Activated CD8-positive, alpha-beta T cell treated with anti-CD3 and anti-CD28 coated beads for 36 hours (primary cell): ENCODE measurements at regions of chr12 and their contacts with region 1.

Region 1: GRCh38 chr12:54251667-54252284 is 28.1 kb downstream of the CBX5 start:
- DNase-seq: peak; percentile 22
- ATAC-seq: peak; percentile 62
- H3K4me3 Mint-ChIP-seq: no peak overlapping the region
- H3K27ac Mint-ChIP-seq: no peak overlapping the region
- H3K4me1 Mint-ChIP-seq: peaks cover 11% of the 10 kb centered on the region
- H3K27me3 Mint-ChIP-seq: no peaks in the 10 kb centered on the region
- CTCF ChIP-seq: peak; percentile 49

Region 2: DNA sequence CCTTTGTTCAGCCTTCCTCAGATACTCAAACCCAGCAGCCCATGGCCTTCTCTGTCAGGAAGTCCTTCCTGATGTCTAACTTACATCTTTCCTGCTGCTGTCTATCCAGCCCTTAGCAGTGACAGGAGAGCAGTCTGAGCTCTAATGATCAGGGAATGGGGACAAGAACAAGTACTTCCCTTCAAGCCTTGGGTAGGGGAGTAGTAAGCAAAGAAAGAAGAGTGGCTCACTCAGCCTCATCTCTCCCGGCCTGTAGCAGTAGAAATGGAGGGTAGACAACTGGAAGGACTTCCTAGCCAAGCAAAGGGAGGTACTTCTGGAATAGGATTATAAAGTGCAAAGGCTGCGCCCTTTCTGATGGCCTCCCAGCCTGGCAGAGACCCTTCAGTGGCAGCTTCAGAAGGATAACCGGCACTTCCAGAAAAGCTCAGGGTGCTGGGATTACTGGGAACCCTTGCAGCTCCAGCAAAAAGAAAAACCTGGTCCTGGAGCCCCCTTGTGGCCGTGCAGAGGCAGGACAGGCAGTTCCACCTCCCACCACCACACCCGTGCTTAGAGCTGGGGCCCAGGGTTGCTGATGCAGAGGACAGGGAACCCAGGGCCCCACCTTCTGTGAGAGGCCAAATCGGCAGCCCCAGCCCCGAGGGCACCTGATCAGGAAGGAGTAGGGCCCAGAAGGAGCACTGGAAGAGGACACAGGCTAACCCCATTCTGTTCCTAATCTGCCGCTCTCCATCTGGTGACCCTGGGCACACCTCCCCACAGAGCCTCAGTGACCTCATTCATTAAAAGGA is 50.6 kb before region 1 on chr12:
- CTCF ChIA-PET with region 1: no interaction called
- POLR2A ChIA-PET with region 1: no interaction called
- intact Hi-C with region 1: no loop called
- DNase-seq: peak; percentile 72
- ATAC-seq: peak; percentile 96
- H3K4me3 Mint-ChIP-seq: no peak overlapping the region
- H3K27ac Mint-ChIP-seq: no peak overlapping the region
- H3K4me1 Mint-ChIP-seq: no peaks in the 10 kb centered on the region
- H3K27me3 Mint-ChIP-seq: peaks cover 52% of the 10 kb centered on the region
- CTCF ChIP-seq: peak; percentile 94

Region 3: DNA sequence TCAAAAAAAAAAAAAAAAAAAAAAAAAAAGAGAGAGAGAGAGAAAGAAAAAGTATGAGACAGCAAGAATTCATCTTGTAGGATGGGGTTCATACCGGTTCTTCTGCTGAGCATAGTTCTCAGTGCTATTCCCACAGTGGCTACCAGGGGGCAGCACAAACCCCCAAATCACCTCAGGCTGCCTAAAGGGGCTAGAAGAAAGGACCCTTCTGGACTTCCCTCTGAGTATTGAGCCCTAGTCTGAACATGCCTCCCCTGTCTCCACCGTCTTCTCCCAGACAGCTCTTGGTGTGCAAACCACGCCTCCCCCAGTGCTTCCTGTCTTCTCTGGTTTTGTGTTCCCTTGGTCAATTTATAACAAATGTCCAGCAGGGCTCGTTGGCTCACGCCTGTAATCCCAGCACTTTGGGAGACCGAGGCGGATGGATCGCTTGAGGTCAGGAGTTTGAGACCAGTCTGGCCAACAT is 31.7 kb before region 1 on chr12:
- CTCF ChIA-PET with region 1: interaction called, 10 read pairs
- POLR2A ChIA-PET with region 1: interaction called, 3 read pairs
- intact Hi-C with region 1: no loop called
- DNase-seq: peak; percentile 87
- ATAC-seq: peak; percentile 65
- H3K4me3 Mint-ChIP-seq: no peak overlapping the region
- H3K27ac Mint-ChIP-seq: no peak overlapping the region
- H3K4me1 Mint-ChIP-seq: peaks cover 20% of the 10 kb centered on the region
- H3K27me3 Mint-ChIP-seq: peaks cover 16% of the 10 kb centered on the region
- CTCF ChIP-seq: peak; percentile 76

Region 4: GRCh38 chr12:54240971-54241588 is 10.7 kb before region 1 on chr12:
- CTCF ChIA-PET with region 1: interaction called, 30 read pairs
- POLR2A ChIA-PET with region 1: no interaction called
- intact Hi-C with region 1: no loop called
- DNase-seq: no peak
- ATAC-seq: peak; percentile 88
- H3K4me3 Mint-ChIP-seq: no peak overlapping the region
- H3K27ac Mint-ChIP-seq: peak overlapping the region; percentile 80
- H3K4me1 Mint-ChIP-seq: peaks cover 12% of the 10 kb centered on the region
- H3K27me3 Mint-ChIP-seq: no peaks in the 10 kb centered on the region
- CTCF ChIP-seq: no peak

Region 5: GRCh38 chr12:54273981-54274380 is 22.2 kb after region 1 on chr12:
- CTCF ChIA-PET with region 1: interaction called, 24 read pairs
- POLR2A ChIA-PET with region 1: interaction called, 17 read pairs
- intact Hi-C with region 1: no loop called
- DNase-seq: no peak
- ATAC-seq: no peak
- H3K4me3 Mint-ChIP-seq: no peak overlapping the region
- H3K27ac Mint-ChIP-seq: no peak overlapping the region
- H3K4me1 Mint-ChIP-seq: peaks cover 62% of the 10 kb centered on the region
- H3K27me3 Mint-ChIP-seq: no peaks in the 10 kb centered on the region
- CTCF ChIP-seq: no peak